ENCODE measurements at regions of chr4 and their contacts with region 1.

Region 1: GRCh38 chr4:83503974-83504373 is 19.1 kb upstream of the ABRAXAS1 start:
- DNase-seq: no peak
- ATAC-seq: no peak
- H3K4me3 ChIP-seq: no peak overlapping the region
- H3K27ac ChIP-seq: no peak overlapping the region
- H3K4me1 ChIP-seq: no peaks in the 10 kb centered on the region
- H3K27me3 ChIP-seq: no peaks in the 10 kb centered on the region
- CTCF ChIP-seq: no peak
- EP300 ChIP-seq: no peak
- POLR2A ChIP-seq: no peak
- RAD21 ChIP-seq: no peak

Region 2: GRCh38 chr4:83490876-83491450 is 13.0 kb before region 1 on chr4:
- CTCF ChIA-PET with region 1: interaction called, 13 read pairs
- POLR2A ChIA-PET with region 1: no interaction called
- RAD21 ChIA-PET with region 1: no interaction called
- SMC1A ChIA-PET with region 1: interaction called, 3 read pairs
- in situ Hi-C with region 1: no loop called
- intact Hi-C with region 1: no loop called
- DNase-seq: no peak
- ATAC-seq: peak; percentile 82
- H3K4me3 ChIP-seq: no peak overlapping the region
- H3K27ac ChIP-seq: no peak overlapping the region
- H3K4me1 ChIP-seq: no peaks in the 10 kb centered on the region
- H3K27me3 ChIP-seq: no peaks in the 10 kb centered on the region
- CTCF ChIP-seq: peak; percentile 78 to 94 (median 86)
- EP300 ChIP-seq: no peak
- POLR2A ChIP-seq: no peak
- RAD21 ChIP-seq: peak; percentile 76

Region 3: DNA sequence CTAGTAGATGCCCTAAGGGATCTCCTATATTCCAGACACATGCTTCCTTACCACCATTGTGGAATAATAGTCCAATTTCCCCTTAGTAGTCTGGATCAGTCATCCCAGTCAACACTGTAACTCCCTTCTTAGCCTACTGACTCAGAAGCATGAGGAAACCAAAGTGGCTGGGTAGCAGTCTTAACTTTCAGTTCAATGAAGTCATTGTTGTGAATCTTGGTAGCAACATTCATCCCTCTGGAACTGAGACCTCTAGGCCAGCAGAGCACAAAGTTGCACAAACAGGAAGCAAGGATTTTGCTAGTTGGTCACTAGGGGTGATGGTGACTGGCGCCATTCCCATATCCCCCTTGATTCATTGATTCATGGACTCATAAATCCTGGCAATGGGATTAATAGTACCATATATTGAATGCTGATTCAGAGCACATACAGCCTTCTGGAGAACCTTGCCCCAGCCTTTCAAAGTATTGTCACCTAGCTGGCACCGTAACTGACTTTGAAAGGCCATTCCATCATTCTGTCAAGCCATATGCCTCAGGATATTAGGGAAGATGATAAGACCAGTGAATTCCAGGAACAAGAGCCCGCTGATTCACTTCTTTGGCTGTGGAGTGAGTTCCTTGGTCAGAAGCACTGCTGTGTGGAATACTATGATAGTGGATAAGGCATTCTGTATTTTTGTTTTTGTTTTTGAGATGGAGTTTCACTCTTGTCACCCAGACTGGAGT is 12.2 kb after region 1 on chr4:
- CTCF ChIA-PET with region 1: no interaction called
- POLR2A ChIA-PET with region 1: no interaction called
- RAD21 ChIA-PET with region 1: no interaction called
- SMC1A ChIA-PET with region 1: no interaction called
- in situ Hi-C with region 1: no loop called
- intact Hi-C with region 1: no loop called
- DNase-seq: no peak
- ATAC-seq: no peak
- H3K4me3 ChIP-seq: no peak overlapping the region
- H3K27ac ChIP-seq: no peak overlapping the region
- H3K4me1 ChIP-seq: no peaks in the 10 kb centered on the region
- H3K27me3 ChIP-seq: no peaks in the 10 kb centered on the region
- CTCF ChIP-seq: no peak
- EP300 ChIP-seq: no peak
- POLR2A ChIP-seq: no peak
- RAD21 ChIP-seq: no peak

Region 4: GRCh38 chr4:83527671-83528070 is 23.7 kb after region 1 on chr4:
- CTCF ChIA-PET with region 1: no interaction called
- POLR2A ChIA-PET with region 1: no interaction called
- RAD21 ChIA-PET with region 1: no interaction called
- SMC1A ChIA-PET with region 1: no interaction called
- in situ Hi-C with region 1: no loop called
- intact Hi-C with region 1: no loop called
- DNase-seq: no peak
- ATAC-seq: no peak
- H3K4me3 ChIP-seq: no peak overlapping the region
- H3K27ac ChIP-seq: no peak overlapping the region
- H3K4me1 ChIP-seq: no peaks in the 10 kb centered on the region
- H3K27me3 ChIP-seq: no peaks in the 10 kb centered on the region
- CTCF ChIP-seq: no peak
- EP300 ChIP-seq: no peak
- POLR2A ChIP-seq: no peak
- RAD21 ChIP-seq: no peak

Region 5: DNA sequence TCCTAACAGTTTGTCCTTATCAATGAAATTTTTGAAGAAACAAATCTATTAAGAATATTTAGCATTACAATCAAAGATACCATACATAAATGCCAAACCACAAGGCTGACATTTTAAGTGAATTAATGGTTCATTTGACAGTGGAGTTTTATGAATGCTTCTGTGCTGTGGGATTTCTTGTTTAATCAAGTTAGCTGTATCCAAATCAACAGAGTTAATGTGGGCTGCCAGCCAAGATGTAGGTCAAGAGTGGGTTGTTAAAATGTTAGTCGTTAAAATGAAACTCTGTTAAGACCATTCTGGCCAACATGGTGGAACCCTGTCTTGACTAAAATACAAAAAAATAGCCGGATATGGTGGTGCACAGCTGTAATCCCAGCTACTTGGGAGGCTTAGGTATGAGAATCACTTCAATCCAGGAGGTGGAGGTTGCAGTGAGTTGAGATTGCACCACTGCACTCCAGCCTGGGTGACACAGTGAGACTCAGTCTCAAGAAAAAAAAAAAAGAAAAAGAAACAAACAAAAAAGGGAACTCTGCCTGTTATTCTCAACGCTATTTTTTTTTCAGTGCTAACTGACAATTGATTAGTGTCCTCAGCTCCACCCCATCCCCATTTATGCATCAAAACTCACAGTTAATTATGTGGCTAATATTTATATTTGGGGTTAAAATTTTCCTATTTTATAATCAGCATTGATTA is 52.2 kb after region 1 on chr4:
- CTCF ChIA-PET with region 1: no interaction called
- POLR2A ChIA-PET with region 1: no interaction called
- RAD21 ChIA-PET with region 1: no interaction called
- SMC1A ChIA-PET with region 1: no interaction called
- in situ Hi-C with region 1: no loop called
- intact Hi-C with region 1: no loop called
- DNase-seq: no peak
- ATAC-seq: no peak
- H3K4me3 ChIP-seq: no peak overlapping the region
- H3K27ac ChIP-seq: no peak overlapping the region
- H3K4me1 ChIP-seq: peaks cover 6% of the 10 kb centered on the region; the same call in 1 of the 2 replicates
- H3K27me3 ChIP-seq: no peaks in the 10 kb centered on the region
- CTCF ChIP-seq: no peak
- EP300 ChIP-seq: no peak
- POLR2A ChIP-seq: no peak
- RAD21 ChIP-seq: no peak

Region 6: DNA sequence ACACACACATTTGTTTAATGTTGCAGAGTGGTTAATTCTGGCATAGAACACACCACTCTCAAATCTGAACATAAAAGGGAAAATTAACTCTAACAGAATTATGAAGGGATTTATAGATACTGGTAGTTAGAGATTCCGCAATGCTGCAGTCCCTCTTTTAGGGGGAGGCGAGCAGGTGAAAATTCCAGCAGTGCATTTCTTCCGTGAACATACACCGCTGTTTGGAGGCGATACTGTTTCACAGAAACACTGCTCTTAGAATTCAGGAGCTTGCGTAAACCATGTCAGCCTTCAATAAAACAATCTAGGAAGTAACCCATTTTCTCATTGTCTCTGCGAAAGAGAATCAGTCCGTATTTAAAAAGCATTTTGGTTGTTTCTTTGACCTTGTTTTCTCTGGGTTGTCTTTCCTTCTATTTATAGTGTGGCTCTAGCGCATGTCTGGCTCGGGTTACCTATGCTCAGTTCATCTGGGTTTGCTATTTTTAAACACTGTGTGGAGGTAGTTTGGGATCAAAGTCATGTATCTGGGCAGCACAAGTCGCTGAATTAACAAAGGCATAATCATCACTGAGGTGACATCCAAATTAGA is 122.4 kb after region 1 on chr4:
- CTCF ChIA-PET with region 1: no interaction called
- POLR2A ChIA-PET with region 1: no interaction called
- RAD21 ChIA-PET with region 1: no interaction called
- SMC1A ChIA-PET with region 1: no interaction called
- in situ Hi-C with region 1: no loop called
- intact Hi-C with region 1: no loop called
- DNase-seq: no peak
- ATAC-seq: no peak
- H3K4me3 ChIP-seq: no peak overlapping the region
- H3K27ac ChIP-seq: no peak overlapping the region
- H3K4me1 ChIP-seq: no peaks in the 10 kb centered on the region
- H3K27me3 ChIP-seq: no peaks in the 10 kb centered on the region
- CTCF ChIP-seq: no peak
- EP300 ChIP-seq: no peak
- POLR2A ChIP-seq: no peak
- RAD21 ChIP-seq: no peak

Region 7: DNA sequence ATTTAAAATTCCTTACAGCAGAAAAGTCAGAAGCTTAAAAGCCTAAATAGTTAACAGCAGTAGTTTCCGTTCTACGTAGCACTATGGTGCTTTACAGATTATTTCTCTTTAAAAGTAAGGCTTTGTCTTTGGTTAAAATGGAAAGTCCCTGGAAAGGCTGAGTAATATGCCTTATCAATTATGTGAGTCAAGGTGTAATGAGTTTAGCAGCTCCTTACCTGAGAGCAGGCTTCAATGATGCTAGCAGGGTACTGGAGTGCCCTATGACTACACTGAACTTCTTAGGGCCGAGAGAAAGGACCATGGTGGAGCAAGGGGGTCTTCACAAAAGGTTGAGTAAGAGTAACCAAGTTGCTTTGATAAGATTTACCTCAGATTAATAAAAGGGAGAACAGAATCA is 1007.7 kb after region 1 on chr4:
- CTCF ChIA-PET with region 1: no interaction called
- POLR2A ChIA-PET with region 1: no interaction called
- RAD21 ChIA-PET with region 1: no interaction called
- SMC1A ChIA-PET with region 1: no interaction called
- in situ Hi-C with region 1: loop called (anchors 10 kb)
- intact Hi-C with region 1: no loop called
- DNase-seq: no peak
- ATAC-seq: no peak
- H3K4me3 ChIP-seq: no peak overlapping the region
- H3K27ac ChIP-seq: no peak overlapping the region
- H3K4me1 ChIP-seq: no peaks in the 10 kb centered on the region
- H3K27me3 ChIP-seq: no peaks in the 10 kb centered on the region; a peak in 1 of 4 replicates
- CTCF ChIP-seq: no peak
- EP300 ChIP-seq: no peak
- POLR2A ChIP-seq: no peak
- RAD21 ChIP-seq: no peak

Measured in GM12878 (cell line).